ENCODE measurements at regions of chr19 and their contacts with region 1.

Region 1: GRCh38 chr19:49746206-49747091 is 16.7 kb downstream of the TSKS start:
- DNase-seq: peak; percentile 97
- ATAC-seq: peak; percentile 87
- H3K4me3 Mint-ChIP-seq: peak overlapping the region; percentile 25
- H3K27ac Mint-ChIP-seq: no peak overlapping the region
- H3K4me1 Mint-ChIP-seq: peaks cover 6% of the 10 kb centered on the region; the same call in 1 of the 2 replicates
- H3K27me3 Mint-ChIP-seq: peaks cover 20% of the 10 kb centered on the region
- CTCF ChIP-seq: no peak

Region 2: DNA sequence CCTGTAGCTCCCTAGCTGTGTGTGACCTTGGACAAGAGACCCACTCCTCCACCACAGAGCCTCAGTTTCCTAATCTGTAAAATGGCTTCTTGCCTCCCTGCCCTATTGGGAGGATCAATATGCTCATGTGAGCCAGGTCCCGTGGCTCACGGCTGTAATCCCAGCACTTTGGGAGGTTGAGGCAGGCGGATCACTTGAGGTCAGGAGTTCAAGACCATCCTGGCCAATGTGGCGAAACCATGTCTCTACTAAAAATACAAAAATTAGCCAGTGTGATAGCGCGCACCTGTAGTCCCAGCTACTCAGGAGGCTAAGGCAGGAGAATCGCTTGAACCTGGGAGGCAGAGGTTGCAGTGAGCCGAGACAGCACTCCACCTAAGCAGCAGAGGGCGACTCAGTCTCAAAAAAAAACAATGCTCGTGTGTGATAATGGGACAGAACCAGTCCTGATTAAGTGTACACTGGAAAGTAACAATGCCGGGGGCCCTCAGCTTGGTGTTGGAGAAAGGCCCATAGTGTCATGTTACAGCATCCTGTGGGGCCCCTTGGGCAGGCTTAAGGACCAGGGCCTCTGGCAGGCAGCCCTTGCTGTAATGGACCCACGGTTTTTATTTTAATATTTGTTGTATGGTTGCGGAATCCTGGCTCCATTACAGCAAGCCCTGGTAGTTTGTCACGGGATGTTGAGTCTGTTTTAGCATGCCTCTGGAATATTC is 243.4 kb before region 1 on chr19:
- CTCF ChIA-PET with region 1: no interaction called
- POLR2A ChIA-PET with region 1: no interaction called
- DNase-seq: no peak
- ATAC-seq: no peak
- H3K4me3 Mint-ChIP-seq: no peak overlapping the region
- H3K27ac Mint-ChIP-seq: no peak overlapping the region
- H3K4me1 Mint-ChIP-seq: peaks cover 31% of the 10 kb centered on the region
- H3K27me3 Mint-ChIP-seq: no peaks in the 10 kb centered on the region; the same call in 1 of the 2 replicates
- CTCF ChIP-seq: peak; percentile 29; the same call in 1 of the 2 replicates

Region 3: DNA sequence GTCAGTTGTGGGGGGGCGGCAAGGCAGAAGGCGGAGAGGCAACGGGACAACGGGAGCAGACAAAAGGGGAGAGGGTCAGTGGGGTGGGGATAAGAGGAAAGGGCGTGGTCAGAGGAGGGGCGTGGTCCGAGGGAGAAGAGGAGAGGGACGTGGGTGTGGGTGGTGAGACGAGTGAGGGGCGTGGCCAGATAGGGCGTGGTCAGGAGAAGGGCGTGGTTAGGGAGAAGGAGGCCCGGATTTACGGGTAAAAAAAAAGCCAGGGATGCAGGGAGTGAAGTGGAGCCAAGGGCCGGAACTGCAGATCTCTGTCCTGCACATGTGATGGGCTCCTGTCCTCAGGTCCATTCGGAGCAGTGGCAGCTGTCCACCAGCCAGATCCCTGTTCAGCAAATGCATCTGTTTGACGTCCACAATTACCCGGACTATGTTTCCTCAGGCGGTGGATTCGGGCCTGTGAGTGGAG is 34.0 kb before region 1 on chr19:
- CTCF ChIA-PET with region 1: interaction called, 11 read pairs
- POLR2A ChIA-PET with region 1: no interaction called
- DNase-seq: peak; percentile 93
- ATAC-seq: peak; percentile 98
- H3K4me3 Mint-ChIP-seq: no peak overlapping the region; the same call in 1 of the 2 replicates
- H3K27ac Mint-ChIP-seq: no peak overlapping the region
- H3K4me1 Mint-ChIP-seq: 0 out of 2 replicates have a peak, but pooled peaks cover 4% of the 10 kb centered on the region
- H3K27me3 Mint-ChIP-seq: no peaks in the 10 kb centered on the region; the same call in 1 of the 2 replicates
- CTCF ChIP-seq: no peak

Region 4: GRCh38 chr19:49812997-49813861 is 66.8 kb after region 1 on chr19 and contains the start of gene FUZ:
- CTCF ChIA-PET with region 1: interaction called, 13 read pairs
- POLR2A ChIA-PET with region 1: no interaction called
- DNase-seq: peak; percentile 98
- ATAC-seq: peak; percentile 63
- H3K4me3 Mint-ChIP-seq: peak within 1 kb of the TSS; percentile 90
- H3K27ac Mint-ChIP-seq: peak within 1 kb of the TSS; percentile 98
- H3K4me1 Mint-ChIP-seq: peaks cover 26% of the 10 kb centered on the region
- H3K27me3 Mint-ChIP-seq: peaks cover 5% of the 10 kb centered on the region; the same call in 1 of the 2 replicates
- CTCF ChIP-seq: no peak
- total RNA-seq, gene FUZ: 35.1 to 36.3 TPM (median 35.7 TPM) in 3 replicates

Measured in WTC11 (cell line).